Naive thymus-derived CD4-positive, alpha-beta T cell (primary cell): ENCODE measurements at regions of chr12 and their contacts with region 1.

Region 1: DNA sequence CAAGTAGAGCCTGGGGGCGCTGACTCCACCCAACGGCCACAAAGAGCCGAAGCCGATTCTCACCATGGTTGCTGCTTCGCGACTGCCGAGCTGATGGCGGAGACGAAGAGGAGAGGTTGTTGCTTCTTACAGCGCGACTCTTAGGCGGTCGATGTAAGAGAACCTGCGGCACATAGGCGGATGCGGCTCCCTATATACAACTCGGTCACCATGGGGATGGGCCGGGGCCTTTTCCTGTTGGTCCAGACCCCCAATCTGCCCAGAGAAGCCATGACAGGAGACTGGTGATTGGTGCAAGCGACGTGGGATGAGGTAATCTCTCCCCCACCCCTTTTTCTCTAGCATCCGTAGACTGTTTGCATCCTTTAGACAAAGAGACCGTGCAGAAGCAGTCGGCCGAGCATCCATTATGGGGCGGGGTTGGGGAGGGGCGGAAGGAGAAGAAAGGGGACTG is at the start of gene TUBA1A:
- DNase-seq: peak; percentile 80 to 99 (median 98)
- ATAC-seq: peak; percentile 93
- H3K4me3 ChIP-seq: peak within 1 kb of the TSS; percentile 91
- H3K4me3 Mint-ChIP-seq: peak within 1 kb of the TSS; percentile 94 to 99 (median 98)
- H3K27ac ChIP-seq: peak within 1 kb of the TSS; percentile 99
- H3K27ac Mint-ChIP-seq: peak within 1 kb of the TSS; percentile 98 to 100 (median 99)
- H3K4me1 ChIP-seq: peaks cover 7 to 12% of the 10 kb centered on the region in 2 donors
- H3K4me1 Mint-ChIP-seq: peaks cover 11 to 32% (median 26%) of the 10 kb centered on the region in 7 donors
- H3K27me3 ChIP-seq: no peaks in the 10 kb centered on the region
- H3K27me3 Mint-ChIP-seq: peaks cover 0 to 5% (median 0%) of the 10 kb centered on the region in 5 donors
- total RNA-seq, gene TUBA1A: 61.8 to 492 (median 98.8) TPM

Region 2: GRCh38 chr12:48716493-48717251 is 472.3 kb before region 1 on chr12 and contains the start of gene CCNT1:
- CTCF ChIA-PET with region 1: no interaction called
- POLR2A ChIA-PET with region 1: no interaction called
- intact Hi-C with region 1: loop called in 1 of 2 experiments (anchors 2 kb)
- DNase-seq: peak; percentile 90 to 100 (median 99)
- ATAC-seq: peak; percentile 93
- H3K4me3 ChIP-seq: peak within 1 kb of the TSS; percentile 88
- H3K4me3 Mint-ChIP-seq: peak within 1 kb of the TSS; percentile 89 to 98 (median 94)
- H3K27ac ChIP-seq: peak within 1 kb of the TSS; percentile 95
- H3K27ac Mint-ChIP-seq: peak within 1 kb of the TSS; percentile 95 to 99 (median 98)
- H3K4me1 ChIP-seq: peaks cover 14 to 24% of the 10 kb centered on the region in 2 donors
- H3K4me1 Mint-ChIP-seq: peaks cover 21 to 50% (median 37%) of the 10 kb centered on the region in 7 donors
- H3K27me3 ChIP-seq: no peaks in the 10 kb centered on the region
- H3K27me3 Mint-ChIP-seq: peaks cover 0 to 4% (median 0%) of the 10 kb centered on the region in 5 donors
- total RNA-seq, gene CCNT1: 62.5 to 127 (median 76.6) TPM

Region 3: DNA sequence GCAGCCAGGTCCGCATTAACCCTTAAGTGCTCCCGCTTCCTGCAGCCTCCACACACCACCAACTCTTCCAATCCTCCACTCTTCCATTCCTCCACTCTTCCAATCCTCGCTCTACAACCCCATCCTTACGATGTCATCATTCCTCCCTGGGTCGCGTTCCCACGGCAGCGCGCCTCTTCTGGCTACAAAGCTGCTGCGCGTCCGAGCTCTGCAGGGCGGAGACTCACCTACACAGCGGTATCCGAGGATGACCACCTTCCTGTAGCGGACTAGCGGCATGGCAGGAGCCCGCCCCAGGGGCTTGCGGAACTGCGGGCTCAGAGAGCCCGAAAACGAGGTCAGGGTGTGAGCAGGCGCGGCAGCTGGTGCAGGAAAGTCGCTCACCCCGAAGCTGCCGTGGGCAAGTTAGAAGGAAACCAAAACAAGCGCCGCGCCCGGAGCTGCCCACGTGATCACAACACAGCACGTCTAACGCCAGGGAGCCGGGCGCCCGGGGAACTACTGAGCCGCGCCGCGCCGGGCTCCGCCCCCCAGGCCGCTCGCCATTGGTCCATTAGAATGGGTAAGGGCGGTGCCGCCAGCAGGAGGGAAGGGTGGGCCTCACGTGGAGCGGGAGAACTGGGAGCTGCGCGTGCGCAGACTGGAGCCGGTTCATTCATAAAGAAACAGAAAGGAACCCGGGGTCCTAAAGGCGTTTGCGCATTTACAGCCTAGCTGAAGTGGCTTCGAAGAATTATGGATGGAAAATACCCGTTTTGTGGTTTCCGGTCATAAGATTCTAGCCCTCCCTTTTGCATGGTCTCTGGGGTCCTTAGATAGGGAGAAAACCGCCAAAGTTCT is 119.2 kb before region 1 on chr12 and contains the start of gene RHEBL1:
- CTCF ChIA-PET with region 1: no interaction called
- POLR2A ChIA-PET with region 1: interaction called, 17 read pairs
- intact Hi-C with region 1: loop called (anchors 1 kb)
- DNase-seq: peak; percentile 93 to 99 (median 96)
- ATAC-seq: peak; percentile 100
- H3K4me3 ChIP-seq: peak within 1 kb of the TSS; percentile 99
- H3K4me3 Mint-ChIP-seq: peak within 1 kb of the TSS; percentile 86 to 99 (median 96)
- H3K27ac ChIP-seq: peak within 1 kb of the TSS; percentile 74
- H3K27ac Mint-ChIP-seq: peak within 1 kb of the TSS; percentile 77 to 92 (median 86)
- H3K4me1 ChIP-seq: peaks cover 5 to 13% of the 10 kb centered on the region in 2 donors
- H3K4me1 Mint-ChIP-seq: peaks cover 14 to 31% (median 18%) of the 10 kb centered on the region in 7 donors
- H3K27me3 ChIP-seq: no peaks in the 10 kb centered on the region
- H3K27me3 Mint-ChIP-seq: no peaks in the 10 kb centered on the region
- total RNA-seq, gene RHEBL1: 1.8 to 9.4 (median 3.3) TPM

Region 4: DNA sequence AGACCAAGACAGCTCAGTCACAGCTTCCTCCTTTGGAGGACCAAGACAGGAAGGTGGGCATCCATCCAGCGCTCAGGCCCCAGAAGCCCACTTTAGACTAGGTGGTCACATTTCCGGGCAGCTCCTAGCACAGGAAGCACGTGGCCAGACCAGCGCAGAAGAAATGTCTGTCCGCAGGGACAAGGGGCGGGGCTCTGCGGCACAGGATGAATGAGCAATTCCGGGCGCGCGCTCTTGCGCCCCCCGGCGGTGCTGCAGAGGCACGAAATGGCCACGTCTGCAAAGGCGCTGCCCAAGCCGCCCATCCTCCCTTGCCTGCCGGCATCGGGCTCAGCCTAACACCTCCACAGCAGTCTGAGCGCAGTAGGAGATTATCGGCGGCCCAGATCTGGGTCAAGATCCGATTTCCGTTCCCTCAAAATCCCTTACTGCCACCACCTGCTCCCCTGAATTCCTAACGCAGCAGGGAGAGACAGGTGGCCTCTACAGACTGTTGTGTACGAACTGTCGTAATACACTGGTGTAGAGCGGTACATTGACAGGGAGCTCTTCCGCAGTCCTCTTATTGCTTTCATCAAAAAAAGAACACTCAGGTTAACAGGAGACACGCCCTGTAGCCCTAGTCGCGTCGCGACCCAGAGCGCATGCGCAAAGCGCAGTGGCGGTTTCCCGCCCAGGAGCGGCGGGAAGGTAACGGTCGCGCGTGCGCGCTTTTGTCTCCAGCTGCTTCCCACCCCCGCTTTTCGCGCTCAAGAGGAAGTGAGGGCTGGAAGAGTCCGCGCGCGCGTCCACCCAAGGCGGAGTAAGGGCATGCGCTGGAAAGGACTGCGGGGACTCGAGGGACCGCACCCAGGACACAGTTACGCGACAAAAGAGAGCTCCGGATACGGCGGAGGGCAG is 58.5 kb before region 1 on chr12:
- CTCF ChIA-PET with region 1: interaction called, 11 read pairs
- POLR2A ChIA-PET with region 1: interaction called, 226 read pairs
- intact Hi-C with region 1: loop called (anchors 1 kb)
- DNase-seq: peak; percentile 87 to 95 (median 94)
- ATAC-seq: peak; percentile 77
- H3K4me3 ChIP-seq: peak overlapping the region; percentile 92
- H3K4me3 Mint-ChIP-seq: peak overlapping the region; percentile 95 to 99 (median 98)
- H3K27ac ChIP-seq: peak overlapping the region; percentile 95
- H3K27ac Mint-ChIP-seq: peak overlapping the region; percentile 97 to 99 (median 99)
- H3K4me1 ChIP-seq: peaks cover 24 to 27% of the 10 kb centered on the region in 2 donors
- H3K4me1 Mint-ChIP-seq: peaks cover 24 to 61% (median 55%) of the 10 kb centered on the region in 7 donors
- H3K27me3 ChIP-seq: no peaks in the 10 kb centered on the region
- H3K27me3 Mint-ChIP-seq: peaks cover 0 to 7% (median 0%) of the 10 kb centered on the region in 5 donors

Region 5: DNA sequence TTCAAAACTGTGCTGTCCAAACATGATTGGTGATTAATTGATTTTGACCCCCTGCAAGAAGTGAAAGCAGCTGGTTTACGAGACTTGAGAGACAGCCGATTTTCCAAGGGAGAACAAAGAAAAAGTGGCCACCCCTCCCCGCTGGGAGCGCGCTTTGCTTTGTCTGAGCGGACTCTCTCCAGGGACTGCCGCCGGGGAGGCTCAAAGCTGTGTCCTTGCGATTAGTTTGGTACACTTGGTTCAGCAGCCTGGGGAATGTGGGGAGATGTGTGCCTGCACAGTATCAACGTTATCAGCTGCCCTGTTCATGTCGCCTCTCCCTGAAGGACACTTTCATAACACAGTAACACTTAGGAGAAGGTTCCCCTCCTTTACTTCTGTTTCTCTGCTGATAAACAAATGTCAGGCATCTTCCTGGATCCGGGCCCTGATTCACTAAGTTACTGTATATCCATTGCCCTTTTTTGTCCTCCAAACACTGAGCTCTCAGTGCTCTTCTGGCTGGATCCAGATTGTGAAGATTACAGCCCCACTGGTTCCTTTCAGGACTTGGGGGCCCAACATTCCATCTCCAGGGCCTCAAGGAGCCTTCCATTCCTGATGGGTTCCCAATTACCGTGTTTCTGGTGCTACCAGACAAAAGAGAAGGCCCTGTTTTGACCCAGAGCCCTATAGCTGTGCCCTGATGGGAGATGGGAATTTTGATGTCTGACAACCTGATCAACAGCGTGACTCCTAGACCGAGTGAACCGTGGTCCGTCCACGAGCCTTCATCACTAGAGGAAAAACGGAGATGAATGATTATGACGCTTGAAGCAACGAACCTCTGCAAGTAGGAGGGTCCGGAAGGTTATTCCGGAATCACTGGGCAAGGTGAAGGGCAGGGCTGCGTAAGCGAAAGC is 44.2 kb after region 1 on chr12:
- CTCF ChIA-PET with region 1: interaction called, 12 read pairs
- POLR2A ChIA-PET with region 1: interaction called, 39 read pairs
- intact Hi-C with region 1: loop called (anchors 1 kb)
- DNase-seq: peak in 1 of 9 donors; percentile 7
- ATAC-seq: no peak
- H3K4me3 ChIP-seq: no peak overlapping the region
- H3K4me3 Mint-ChIP-seq: peak overlapping the region; percentile 68 to 89 (median 85)
- H3K27ac ChIP-seq: no peak overlapping the region
- H3K27ac Mint-ChIP-seq: peak overlapping the region; percentile 65 to 93 (median 89)
- H3K4me1 ChIP-seq: peaks cover 0 to 7% of the 10 kb centered on the region in 2 donors
- H3K4me1 Mint-ChIP-seq: peaks cover 0 to 12% (median 9%) of the 10 kb centered on the region in 7 donors
- H3K27me3 ChIP-seq: no peaks in the 10 kb centered on the region
- H3K27me3 Mint-ChIP-seq: peaks cover 0 to 7% (median 0%) of the 10 kb centered on the region in 5 donors

Region 6: DNA sequence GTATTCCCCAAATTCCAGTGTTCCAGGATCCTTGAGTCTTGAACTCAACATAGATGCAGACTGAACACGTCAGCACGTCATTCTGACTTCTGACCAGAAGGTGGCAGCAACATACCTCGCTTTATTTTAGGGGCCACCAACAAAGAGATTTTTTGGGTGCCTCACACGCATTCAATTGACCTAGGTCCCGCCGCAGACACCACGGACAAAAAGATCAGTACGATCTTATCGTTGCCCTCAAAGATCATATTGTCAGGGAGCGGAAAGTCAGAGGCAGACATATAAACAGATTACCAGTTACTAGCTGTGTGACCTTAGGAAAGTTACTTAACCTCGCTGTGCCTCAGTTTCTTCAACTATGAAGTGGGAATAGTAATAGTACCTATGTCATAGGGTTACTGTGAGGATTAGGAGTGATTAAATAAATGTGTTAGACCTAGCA is 99.5 kb after region 1 on chr12:
- CTCF ChIA-PET with region 1: no interaction called
- POLR2A ChIA-PET with region 1: no interaction called
- intact Hi-C with region 1: no loop called
- DNase-seq: peak in 8 of 9 donors; percentile 37 to 71 (median 66)
- ATAC-seq: peak; percentile 85
- H3K4me3 ChIP-seq: no peak overlapping the region
- H3K4me3 Mint-ChIP-seq: no peak overlapping the region
- H3K27ac ChIP-seq: no peak overlapping the region
- H3K27ac Mint-ChIP-seq: no peak overlapping the region
- H3K4me1 ChIP-seq: no peaks in the 10 kb centered on the region
- H3K4me1 Mint-ChIP-seq: peaks cover 0 to 1% (median 0%) of the 10 kb centered on the region in 7 donors
- H3K27me3 ChIP-seq: no peaks in the 10 kb centered on the region
- H3K27me3 Mint-ChIP-seq: peaks cover 31 to 53% (median 38%) of the 10 kb centered on the region in 5 donors

Region 7: DNA sequence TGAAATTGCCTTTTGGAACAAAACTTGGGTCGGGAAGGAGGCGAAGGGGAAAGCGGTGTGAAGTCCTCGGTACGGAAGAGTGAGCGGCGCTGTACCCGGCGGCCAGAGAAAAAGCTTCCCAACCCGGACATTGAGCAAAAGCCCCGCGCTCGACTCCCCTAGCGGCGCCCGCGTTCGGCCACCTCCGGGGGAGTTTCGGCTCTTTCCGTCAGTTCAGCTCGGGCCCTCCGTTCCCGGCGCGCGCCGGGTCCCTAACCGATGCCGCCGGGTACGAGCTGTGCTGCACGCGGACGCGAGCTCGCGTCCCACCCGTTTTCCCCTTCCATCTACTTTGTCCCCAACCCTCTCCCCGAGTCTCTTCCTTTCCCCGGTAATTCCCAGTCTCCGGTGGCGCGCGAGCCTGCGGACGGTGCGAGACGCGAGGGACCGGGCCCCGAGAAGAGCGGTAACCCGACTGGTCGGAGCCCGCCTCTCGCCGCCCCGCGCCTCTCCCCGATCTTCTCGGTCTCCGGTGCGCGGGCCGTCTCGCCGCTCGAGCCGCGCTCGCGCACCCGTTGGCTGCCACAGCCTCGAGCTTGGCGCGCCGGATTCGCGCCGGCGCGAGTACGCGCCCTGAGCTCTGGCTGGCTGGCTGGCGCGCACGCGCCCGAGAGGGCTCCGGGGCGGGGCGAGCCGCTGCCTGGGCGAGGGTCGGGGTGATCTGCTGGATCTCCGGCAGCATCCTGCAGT is 177.9 kb after region 1 on chr12:
- CTCF ChIA-PET with region 1: no interaction called
- POLR2A ChIA-PET with region 1: no interaction called
- intact Hi-C with region 1: loop called in 1 of 2 experiments (anchors 2 kb)
- DNase-seq: peak; percentile 72 to 95 (median 82)
- ATAC-seq: peak; percentile 90
- H3K4me3 ChIP-seq: peak overlapping the region; percentile 90
- H3K4me3 Mint-ChIP-seq: peak overlapping the region; percentile 71 to 97 (median 88)
- H3K27ac ChIP-seq: peak overlapping the region; percentile 87
- H3K27ac Mint-ChIP-seq: peak overlapping the region; percentile 65 to 97 (median 94)
- H3K4me1 ChIP-seq: peaks cover 0 to 15% of the 10 kb centered on the region in 2 donors
- H3K4me1 Mint-ChIP-seq: peaks cover 11 to 39% (median 31%) of the 10 kb centered on the region in 7 donors
- H3K27me3 ChIP-seq: no peaks in the 10 kb centered on the region
- H3K27me3 Mint-ChIP-seq: peaks cover 0 to 2% (median 0%) of the 10 kb centered on the region in 5 donors

Region 8: GRCh38 chr12:49707128-49707811 is 518.3 kb after region 1 on chr12 and contains the start of gene FMNL3:
- CTCF ChIA-PET with region 1: no interaction called
- POLR2A ChIA-PET with region 1: no interaction called
- intact Hi-C with region 1: loop called in 1 of 2 experiments (anchors 1 kb)
- DNase-seq: peak; percentile 97 to 100 (median 98)
- ATAC-seq: peak; percentile 97
- H3K4me3 ChIP-seq: peak within 1 kb of the TSS; percentile 78
- H3K4me3 Mint-ChIP-seq: peak within 1 kb of the TSS; percentile 78 to 96 (median 92)
- H3K27ac ChIP-seq: peak within 1 kb of the TSS; percentile 92
- H3K27ac Mint-ChIP-seq: peak within 1 kb of the TSS; percentile 72 to 94 (median 89)
- H3K4me1 ChIP-seq: peaks cover 11 to 32% of the 10 kb centered on the region in 2 donors
- H3K4me1 Mint-ChIP-seq: peaks cover 38 to 49% (median 46%) of the 10 kb centered on the region in 7 donors
- H3K27me3 ChIP-seq: no peaks in the 10 kb centered on the region
- H3K27me3 Mint-ChIP-seq: peaks cover 0 to 29% (median 0%) of the 10 kb centered on the region in 5 donors
- total RNA-seq, gene FMNL3: 33.3 to 40.4 (median 39.7) TPM